Activated CD4-positive, alpha-beta T cell treated with anti-CD3 and anti-CD28 coated beads for 36 hours (primary cell): ENCODE measurements at regions of chr3 and their contacts with region 1.

Region 1: DNA sequence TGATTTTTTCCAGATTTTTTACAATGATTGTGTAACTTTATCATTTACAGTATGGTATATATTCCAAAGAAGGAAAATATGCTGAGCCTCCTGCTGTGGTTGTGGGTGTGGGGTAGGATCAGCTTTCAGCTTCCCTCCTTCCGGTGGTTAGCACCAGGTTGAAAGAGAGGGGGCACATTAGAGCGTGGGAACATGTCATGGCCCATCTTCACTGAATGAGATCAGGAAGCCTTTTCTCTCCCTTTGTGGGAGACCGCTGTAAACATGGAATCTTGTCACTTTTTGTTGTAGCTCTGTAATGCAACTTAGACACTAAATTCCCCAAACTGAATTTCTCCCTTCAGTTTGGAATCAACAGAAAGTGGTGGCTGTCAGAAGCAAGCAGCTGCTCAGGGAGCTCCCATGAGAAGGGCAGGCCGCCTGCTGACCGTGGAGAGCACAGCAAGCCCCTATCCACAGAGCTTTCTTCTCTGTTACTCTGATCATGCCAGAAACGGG is 86.7 kb upstream of the LIMD1 start:
- DNase-seq: no peak
- ATAC-seq: no peak
- H3K4me3 Mint-ChIP-seq: no peak overlapping the region
- H3K27ac Mint-ChIP-seq: no peak overlapping the region
- H3K4me1 Mint-ChIP-seq: peaks cover 13% of the 10 kb centered on the region
- H3K27me3 Mint-ChIP-seq: no peaks in the 10 kb centered on the region

Region 2: GRCh38 chr3:45210308-45211041 is 297.4 kb before region 1 on chr3:
- CTCF ChIA-PET with region 1: no interaction called
- POLR2A ChIA-PET with region 1: no interaction called
- intact Hi-C with region 1: loop called in 1 of 2 experiments (anchors 5 kb)
- DNase-seq: peak; percentile 90
- ATAC-seq: peak; percentile 91
- H3K4me3 Mint-ChIP-seq: no peak overlapping the region
- H3K27ac Mint-ChIP-seq: no peak overlapping the region
- H3K4me1 Mint-ChIP-seq: peaks cover 28% of the 10 kb centered on the region
- H3K27me3 Mint-ChIP-seq: peaks cover 10% of the 10 kb centered on the region

Region 3: DNA sequence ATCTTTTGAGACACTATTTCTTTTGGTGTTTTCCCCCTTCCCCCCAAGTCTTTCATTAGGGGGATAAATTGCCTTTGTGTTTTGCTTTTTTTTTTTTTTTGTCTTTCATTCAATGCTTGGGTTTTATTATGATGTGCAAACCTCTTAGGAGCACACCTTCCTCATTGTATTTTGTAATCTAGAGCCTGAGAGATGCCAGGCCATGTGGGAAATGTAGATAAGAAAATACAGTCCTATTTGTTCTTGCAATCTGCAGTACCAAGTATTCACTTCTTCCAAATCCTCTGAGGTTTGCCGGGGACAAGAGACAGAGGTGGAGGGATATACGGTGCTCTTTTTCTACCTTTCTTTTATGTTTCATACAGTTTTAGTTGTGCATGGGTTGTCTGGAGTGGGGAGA is 52.8 kb before region 1 on chr3:
- CTCF ChIA-PET with region 1: no interaction called
- POLR2A ChIA-PET with region 1: no interaction called
- intact Hi-C with region 1: no loop called
- DNase-seq: no peak
- ATAC-seq: no peak
- H3K4me3 Mint-ChIP-seq: no peak overlapping the region
- H3K27ac Mint-ChIP-seq: no peak overlapping the region
- H3K4me1 Mint-ChIP-seq: no peaks in the 10 kb centered on the region
- H3K27me3 Mint-ChIP-seq: no peaks in the 10 kb centered on the region

Region 4: GRCh38 chr3:45486136-45486535 is 21.7 kb before region 1 on chr3:
- CTCF ChIA-PET with region 1: no interaction called
- POLR2A ChIA-PET with region 1: no interaction called
- intact Hi-C with region 1: no loop called
- DNase-seq: no peak
- ATAC-seq: no peak
- H3K4me3 Mint-ChIP-seq: no peak overlapping the region
- H3K27ac Mint-ChIP-seq: no peak overlapping the region
- H3K4me1 Mint-ChIP-seq: peaks cover 9% of the 10 kb centered on the region
- H3K27me3 Mint-ChIP-seq: no peaks in the 10 kb centered on the region

Region 5: DNA sequence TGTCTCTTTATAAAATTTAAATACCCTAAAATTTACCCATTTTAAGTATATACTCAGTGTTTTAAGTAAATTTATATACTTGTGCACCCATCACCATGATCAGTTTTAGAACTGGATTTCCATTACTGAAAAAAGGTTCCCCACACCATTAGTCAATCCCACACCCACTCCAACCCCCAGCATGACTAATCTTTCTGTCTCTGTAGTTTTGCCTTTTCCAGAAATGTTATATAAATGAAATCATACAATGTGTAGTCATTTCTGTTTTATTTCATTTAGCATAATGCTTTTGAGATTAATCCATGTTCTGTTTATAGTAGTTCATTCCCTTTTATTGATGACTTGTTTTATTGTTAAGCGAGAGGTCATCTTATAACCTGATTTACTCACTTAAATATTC is 20.6 kb after region 1 on chr3:
- CTCF ChIA-PET with region 1: interaction called, 7 read pairs
- POLR2A ChIA-PET with region 1: interaction called, 4 read pairs
- intact Hi-C with region 1: loop called in 1 of 2 experiments (anchors 2 kb)
- DNase-seq: peak; percentile 66
- ATAC-seq: peak; percentile 76
- H3K4me3 Mint-ChIP-seq: no peak overlapping the region
- H3K27ac Mint-ChIP-seq: no peak overlapping the region
- H3K4me1 Mint-ChIP-seq: peaks cover 15% of the 10 kb centered on the region
- H3K27me3 Mint-ChIP-seq: no peaks in the 10 kb centered on the region

Region 6: GRCh38 chr3:45665101-45665572 is 157.3 kb after region 1 on chr3:
- CTCF ChIA-PET with region 1: interaction called, 40 read pairs
- POLR2A ChIA-PET with region 1: interaction called, 3 read pairs
- intact Hi-C with region 1: loop called in 1 of 2 experiments (anchors 1 kb)
- DNase-seq: peak; percentile 76
- ATAC-seq: peak; percentile 23
- H3K4me3 Mint-ChIP-seq: peak overlapping the region; percentile 67
- H3K27ac Mint-ChIP-seq: peak overlapping the region; percentile 68
- H3K4me1 Mint-ChIP-seq: peaks cover 54% of the 10 kb centered on the region
- H3K27me3 Mint-ChIP-seq: no peaks in the 10 kb centered on the region

Region 7: DNA sequence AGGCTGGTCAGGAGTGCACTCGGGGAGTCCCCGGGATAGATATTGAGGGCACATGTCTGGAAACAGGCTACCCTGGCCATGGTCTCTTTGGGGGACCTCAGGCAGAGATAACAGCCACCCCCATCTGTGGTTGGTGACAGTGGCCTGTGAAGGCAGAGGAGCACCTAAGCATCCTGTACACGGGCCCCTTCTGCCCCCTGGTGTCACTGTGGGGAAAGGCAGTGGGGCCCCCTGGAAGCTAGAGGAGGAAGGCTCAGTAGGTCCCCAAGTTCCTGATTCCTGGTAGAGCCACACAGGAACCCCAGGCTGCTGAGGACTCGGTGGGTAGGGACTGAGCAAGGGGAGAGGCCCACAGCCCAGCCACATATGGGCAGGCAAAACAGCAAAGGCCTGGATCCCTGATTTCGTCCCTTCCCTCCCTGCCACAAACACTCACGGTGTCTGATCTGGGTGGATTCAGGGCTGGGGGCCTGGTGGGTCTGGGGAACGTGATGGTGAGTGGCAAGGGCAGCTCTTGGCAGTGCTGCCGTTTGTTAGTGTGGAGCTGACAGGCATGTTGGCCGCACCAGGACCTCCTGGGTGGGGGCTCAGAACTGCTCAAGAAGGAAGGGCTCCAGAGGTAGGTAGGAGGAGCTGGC is 421.3 kb after region 1 on chr3:
- CTCF ChIA-PET with region 1: interaction called, 3 read pairs
- POLR2A ChIA-PET with region 1: no interaction called
- intact Hi-C with region 1: loop called (anchors 2 to 5 kb)
- DNase-seq: peak; percentile 82
- ATAC-seq: peak; percentile 95
- H3K4me3 Mint-ChIP-seq: no peak overlapping the region
- H3K27ac Mint-ChIP-seq: no peak overlapping the region
- H3K4me1 Mint-ChIP-seq: no peaks in the 10 kb centered on the region
- H3K27me3 Mint-ChIP-seq: no peaks in the 10 kb centered on the region

Region 8: DNA sequence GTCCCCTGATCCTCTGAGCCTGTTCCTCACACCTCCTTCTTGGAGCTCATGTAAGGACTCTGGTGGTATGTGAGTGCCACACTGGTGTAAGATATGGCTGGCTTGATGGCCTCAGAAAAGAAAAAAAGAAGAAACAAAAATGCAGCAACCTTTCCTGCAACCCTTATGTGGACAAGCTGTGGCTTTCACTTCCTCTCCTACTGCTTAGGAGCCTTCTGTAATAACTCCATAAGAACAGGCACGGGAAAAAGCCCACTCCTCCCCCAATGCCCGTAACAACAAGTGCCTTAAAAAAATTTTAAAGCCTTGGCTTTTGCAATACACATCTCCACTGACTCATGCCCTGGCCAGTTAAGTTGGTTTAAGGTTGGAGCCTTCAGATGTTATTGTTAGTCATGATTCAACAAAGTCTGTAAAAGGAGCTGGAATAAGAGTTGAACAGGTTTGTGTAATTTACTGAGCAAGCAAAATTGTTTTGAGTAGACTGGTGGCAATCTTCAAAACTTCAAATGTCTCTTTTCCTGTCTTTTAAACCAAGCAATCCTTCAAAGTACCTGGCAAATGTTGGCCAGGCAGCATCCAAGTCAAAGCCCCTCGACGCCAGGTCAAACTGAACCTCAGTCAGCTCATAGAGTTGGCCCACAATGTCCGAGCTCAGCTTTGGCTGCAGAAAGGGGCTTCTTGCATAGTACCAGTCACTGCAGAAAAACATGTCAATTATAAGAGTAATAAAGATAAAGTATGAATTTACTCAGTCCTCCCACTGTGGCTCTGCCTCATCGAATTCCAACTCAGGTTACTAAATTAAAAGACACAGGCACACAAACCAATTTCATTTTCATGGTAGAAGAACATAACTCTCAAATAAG is 464.9 kb after region 1 on chr3:
- CTCF ChIA-PET with region 1: no interaction called
- POLR2A ChIA-PET with region 1: no interaction called
- intact Hi-C with region 1: no loop called
- DNase-seq: no peak
- ATAC-seq: peak; percentile 54
- H3K4me3 Mint-ChIP-seq: no peak overlapping the region
- H3K27ac Mint-ChIP-seq: no peak overlapping the region
- H3K4me1 Mint-ChIP-seq: peaks cover 35% of the 10 kb centered on the region
- H3K27me3 Mint-ChIP-seq: no peaks in the 10 kb centered on the region

Region 9: DNA sequence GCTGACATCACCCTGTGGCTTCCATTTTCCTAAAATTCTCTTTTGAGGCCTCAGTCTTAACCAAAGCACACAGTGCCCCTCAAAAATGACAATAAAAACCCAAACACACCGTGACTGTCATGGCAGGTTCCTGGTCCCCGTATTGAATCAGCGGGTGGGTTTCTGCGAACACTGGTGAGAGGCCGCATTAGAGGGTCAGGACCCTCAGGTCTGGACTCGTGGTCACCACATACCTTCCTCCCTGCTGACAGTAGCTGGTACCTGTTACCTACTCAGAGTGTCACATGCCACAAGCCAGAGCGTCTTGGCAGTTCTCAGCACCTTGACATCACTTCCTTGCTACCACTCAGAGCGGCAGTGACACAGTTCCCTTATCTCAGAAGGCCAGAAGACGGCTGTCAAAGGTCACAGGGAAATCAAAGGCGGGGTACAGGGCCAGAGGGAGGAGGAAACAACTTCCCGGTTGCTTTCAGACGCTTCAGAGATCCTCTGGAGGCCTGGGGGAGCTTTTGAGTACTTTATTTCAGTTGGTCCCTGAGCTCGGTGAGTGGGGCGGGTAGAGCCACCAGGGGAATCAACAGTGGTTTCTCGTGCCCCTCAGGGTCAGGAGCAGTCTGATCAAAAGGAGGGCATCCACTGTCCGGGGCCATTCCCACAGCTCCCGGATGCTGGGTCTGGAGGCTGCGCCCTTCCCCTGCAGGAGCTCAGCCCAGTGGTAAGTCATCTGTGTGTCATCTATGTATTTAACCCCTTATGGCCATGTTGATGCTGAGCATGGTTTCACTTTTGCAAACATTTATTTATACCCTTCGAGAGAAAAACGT is 899.1 kb after region 1 on chr3 and contains the starts of genes CCR5AS and CCRL2:
- CTCF ChIA-PET with region 1: no interaction called
- POLR2A ChIA-PET with region 1: no interaction called
- intact Hi-C with region 1: no loop called
- DNase-seq: peak; percentile 65
- ATAC-seq: peak; percentile 92
- H3K4me3 Mint-ChIP-seq: peak within 1 kb of the TSS; percentile 71
- H3K27ac Mint-ChIP-seq: peak within 1 kb of the TSS; percentile 81
- H3K4me1 Mint-ChIP-seq: peaks cover 33% of the 10 kb centered on the region
- H3K27me3 Mint-ChIP-seq: peaks cover 2% of the 10 kb centered on the region
- total RNA-seq, gene CCRL2: 1.0 to 1.3 TPM